CD8-positive, alpha-beta T cell (primary cell): ENCODE measurements at regions of chr6 and their contacts with region 1.

Region 1: DNA sequence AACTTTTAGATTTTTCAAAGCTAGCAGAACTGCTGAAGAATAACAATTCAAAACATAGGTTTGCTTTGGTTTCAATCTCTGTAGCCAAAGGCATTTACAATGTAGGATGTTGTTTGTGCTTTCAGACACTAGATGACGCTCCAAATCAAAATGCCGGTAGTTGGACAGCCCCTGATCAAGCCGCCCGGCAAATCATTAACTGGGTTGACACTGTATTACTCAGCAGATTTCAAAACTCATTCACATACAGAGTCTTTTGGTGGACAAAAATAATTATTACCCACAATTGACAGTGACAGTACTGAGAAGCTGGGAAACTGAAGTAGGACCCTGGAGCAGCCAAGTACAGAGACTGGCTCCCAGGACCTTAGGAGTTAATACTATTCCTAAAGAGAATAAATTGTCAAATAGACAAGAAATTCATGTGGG is 21.3 kb upstream of the HFE start:
- DNase-seq: peak in 7 of 9 experiments; percentile 32 to 86 (median 58)
- ATAC-seq: peak; percentile 95
- H3K4me3 ChIP-seq: no peak overlapping the region
- H3K4me3 Mint-ChIP-seq: no peak overlapping the region
- H3K27ac ChIP-seq: no peak overlapping the region
- H3K27ac Mint-ChIP-seq: no peak overlapping the region
- H3K4me1 ChIP-seq: peaks cover 6% of the 10 kb centered on the region
- H3K4me1 Mint-ChIP-seq: peaks cover 5% of the 10 kb centered on the region
- H3K27me3 ChIP-seq: no peaks in the 10 kb centered on the region
- H3K27me3 Mint-ChIP-seq: peaks cover 1% of the 10 kb centered on the region
- CTCF ChIP-seq: peak; percentile 95

Region 2: GRCh38 chr6:26087284-26088115 is 21.5 kb after region 1 on chr6 and contains the start of gene HFE:
- CTCF ChIA-PET with region 1: interaction called, 666 read pairs
- POLR2A ChIA-PET with region 1: interaction called, 15 read pairs
- intact Hi-C with region 1: no loop called
- DNase-seq: peak in 7 of 9 experiments; percentile 10 to 59 (median 40)
- ATAC-seq: peak; percentile 35
- H3K4me3 ChIP-seq: peak within 1 kb of the TSS; percentile 75 to 84
- H3K4me3 Mint-ChIP-seq: peak within 1 kb of the TSS; percentile 88
- H3K27ac ChIP-seq: peak within 1 kb of the TSS; percentile 56 to 60
- H3K27ac Mint-ChIP-seq: peak within 1 kb of the TSS; percentile 81
- H3K4me1 ChIP-seq: peaks cover 27% of the 10 kb centered on the region
- H3K4me1 Mint-ChIP-seq: peaks cover 36% of the 10 kb centered on the region
- H3K27me3 ChIP-seq: peaks cover 0 to 2% of the 10 kb centered on the region in 2 experiments
- H3K27me3 Mint-ChIP-seq: no peaks in the 10 kb centered on the region
- CTCF ChIP-seq: no peak
- total RNA-seq, gene HFE: 0.30 to 0.44 TPM

Region 3: DNA sequence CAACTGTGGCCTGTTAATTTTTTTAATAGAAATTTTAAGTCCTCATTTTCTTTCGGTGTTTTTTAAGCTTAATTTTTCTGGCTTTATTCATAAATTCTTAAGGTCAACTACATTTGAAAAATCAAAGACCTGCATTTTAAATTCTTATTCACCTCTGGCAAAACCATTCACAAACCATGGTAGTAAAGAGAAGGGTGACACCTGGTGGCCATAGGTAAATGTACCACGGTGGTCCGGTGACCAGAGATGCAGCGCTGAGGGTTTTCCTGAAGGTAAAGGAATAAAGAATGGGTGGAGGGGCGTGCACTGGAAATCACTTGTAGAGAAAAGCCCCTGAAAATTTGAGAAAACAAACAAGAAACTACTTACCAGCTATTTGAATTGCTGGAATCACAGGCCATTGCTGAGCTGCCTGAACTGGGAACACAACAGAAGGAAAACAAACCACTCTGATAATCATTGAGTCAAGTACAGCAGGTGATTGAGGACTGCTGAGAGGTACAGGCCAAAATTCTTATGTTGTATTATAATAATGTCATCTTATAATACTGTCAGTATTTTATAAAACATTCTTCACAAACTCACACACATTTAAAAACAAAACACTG is 31.4 kb after region 1 on chr6:
- CTCF ChIA-PET with region 1: interaction called, 666 read pairs
- POLR2A ChIA-PET with region 1: interaction called, 87 read pairs
- intact Hi-C with region 1: loop called (anchors 1 kb)
- DNase-seq: peak; percentile 22 to 84 (median 71)
- ATAC-seq: peak; percentile 84
- H3K4me3 ChIP-seq: no peak overlapping the region
- H3K4me3 Mint-ChIP-seq: no peak overlapping the region
- H3K27ac ChIP-seq: no peak overlapping the region
- H3K27ac Mint-ChIP-seq: no peak overlapping the region
- H3K4me1 ChIP-seq: no peaks in the 10 kb centered on the region
- H3K4me1 Mint-ChIP-seq: peaks cover 5% of the 10 kb centered on the region
- H3K27me3 ChIP-seq: no peaks in the 10 kb centered on the region
- H3K27me3 Mint-ChIP-seq: no peaks in the 10 kb centered on the region
- CTCF ChIP-seq: peak; percentile 91

Region 4: GRCh38 chr6:26351544-26351953 is 285.6 kb after region 1 on chr6:
- CTCF ChIA-PET with region 1: no interaction called
- POLR2A ChIA-PET with region 1: no interaction called
- intact Hi-C with region 1: no loop called
- DNase-seq: no peak
- ATAC-seq: no peak
- H3K4me3 ChIP-seq: no peak overlapping the region
- H3K4me3 Mint-ChIP-seq: no peak overlapping the region
- H3K27ac ChIP-seq: no peak overlapping the region
- H3K27ac Mint-ChIP-seq: no peak overlapping the region
- H3K4me1 ChIP-seq: no peaks in the 10 kb centered on the region
- H3K4me1 Mint-ChIP-seq: no peaks in the 10 kb centered on the region
- H3K27me3 ChIP-seq: no peaks in the 10 kb centered on the region
- H3K27me3 Mint-ChIP-seq: no peaks in the 10 kb centered on the region
- CTCF ChIP-seq: no peak